ENCODE measurements at regions of chr10 and their contacts with region 1.

Region 1: GRCh38 chr10:68331455-68332258 is at the start of gene HNRNPH3:
- DNase-seq: peak; percentile 99 to 100
- H3K4me3 ChIP-seq: peak within 1 kb of the TSS; percentile 68
- H3K4me3 Mint-ChIP-seq: peak within 1 kb of the TSS; percentile 87
- H3K27ac Mint-ChIP-seq: peak within 1 kb of the TSS; percentile 100
- H3K4me1 ChIP-seq: peaks cover 21% of the 10 kb centered on the region
- H3K4me1 Mint-ChIP-seq: peaks cover 45% of the 10 kb centered on the region
- H3K27me3 ChIP-seq: no peaks in the 10 kb centered on the region
- H3K27me3 Mint-ChIP-seq: no peaks in the 10 kb centered on the region
- CTCF ChIP-seq: peak in 1 of 2 experiments; percentile 1
- total RNA-seq, gene HNRNPH3: 262 and 283 TPM in 2 replicates

Region 2: DNA sequence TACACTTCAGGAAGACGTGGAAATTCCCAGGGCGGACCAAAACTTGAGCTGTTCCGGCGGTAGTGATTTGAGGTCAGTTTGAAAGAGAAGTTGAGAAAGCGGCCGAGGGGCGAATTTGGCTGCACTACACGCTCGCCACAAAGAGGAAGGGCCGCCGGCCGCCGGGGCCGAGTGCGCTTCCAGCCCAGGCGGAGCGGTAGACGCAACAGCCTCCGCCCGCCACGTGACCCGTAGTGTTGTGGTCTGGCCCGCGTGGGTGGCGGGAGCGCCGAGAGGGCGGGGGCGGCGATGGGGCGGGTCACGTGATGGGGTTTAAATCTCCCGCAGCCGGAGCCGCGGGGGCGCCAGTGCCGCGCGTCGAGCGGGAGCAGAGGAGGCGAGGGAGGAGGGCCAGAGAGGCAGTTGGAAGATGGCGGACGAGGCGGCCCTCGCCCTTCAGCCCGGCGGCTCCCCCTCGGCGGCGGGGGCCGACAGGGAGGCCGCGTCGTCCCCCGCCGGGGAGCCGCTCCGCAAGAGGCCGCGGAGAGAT is 447.3 kb before region 1 on chr10 and contains the start of gene SIRT1:
- CTCF ChIA-PET with region 1: no interaction called
- POLR2A ChIA-PET with region 1: interaction called, 3 read pairs
- intact Hi-C with region 1: loop called (anchors 10 kb)
- DNase-seq: peak; percentile 98 to 100
- H3K4me3 ChIP-seq: peak within 1 kb of the TSS; percentile 63
- H3K4me3 Mint-ChIP-seq: peak within 1 kb of the TSS; percentile 90
- H3K27ac Mint-ChIP-seq: peak within 1 kb of the TSS; percentile 91
- H3K4me1 ChIP-seq: no peaks in the 10 kb centered on the region
- H3K4me1 Mint-ChIP-seq: no peaks in the 10 kb centered on the region
- H3K27me3 ChIP-seq: no peaks in the 10 kb centered on the region
- H3K27me3 Mint-ChIP-seq: no peaks in the 10 kb centered on the region
- CTCF ChIP-seq: peak in 1 of 2 experiments; percentile 23
- total RNA-seq, gene SIRT1: 43.1 and 44.1 TPM in 2 replicates

Region 3: GRCh38 chr10:67925449-67926005 is 406.1 kb before region 1 on chr10:
- CTCF ChIA-PET with region 1: no interaction called
- POLR2A ChIA-PET with region 1: interaction called, 15 read pairs
- intact Hi-C with region 1: no loop called
- DNase-seq: no peak
- H3K4me3 ChIP-seq: no peak overlapping the region
- H3K4me3 Mint-ChIP-seq: no peak overlapping the region
- H3K27ac Mint-ChIP-seq: no peak overlapping the region
- H3K4me1 ChIP-seq: no peaks in the 10 kb centered on the region
- H3K4me1 Mint-ChIP-seq: no peaks in the 10 kb centered on the region
- H3K27me3 ChIP-seq: no peaks in the 10 kb centered on the region
- H3K27me3 Mint-ChIP-seq: no peaks in the 10 kb centered on the region
- CTCF ChIP-seq: no peak

Region 4: GRCh38 chr10:68231106-68231816 is 100.4 kb before region 1 on chr10:
- CTCF ChIA-PET with region 1: interaction called, 8 read pairs
- POLR2A ChIA-PET with region 1: interaction called, 37 read pairs
- intact Hi-C with region 1: loop called (anchors 1 kb)
- DNase-seq: peak; percentile 89 to 94
- H3K4me3 ChIP-seq: peak overlapping the region; percentile 86
- H3K4me3 Mint-ChIP-seq: peak overlapping the region; percentile 87
- H3K27ac Mint-ChIP-seq: peak overlapping the region; percentile 72
- H3K4me1 ChIP-seq: 0 out of 2 replicates have a peak, but pooled peaks cover 5% of the 10 kb centered on the region
- H3K4me1 Mint-ChIP-seq: peaks cover 7% of the 10 kb centered on the region
- H3K27me3 ChIP-seq: no peaks in the 10 kb centered on the region
- H3K27me3 Mint-ChIP-seq: peaks cover 5% of the 10 kb centered on the region
- CTCF ChIP-seq: peak in 1 of 2 experiments; percentile 52

Region 5: DNA sequence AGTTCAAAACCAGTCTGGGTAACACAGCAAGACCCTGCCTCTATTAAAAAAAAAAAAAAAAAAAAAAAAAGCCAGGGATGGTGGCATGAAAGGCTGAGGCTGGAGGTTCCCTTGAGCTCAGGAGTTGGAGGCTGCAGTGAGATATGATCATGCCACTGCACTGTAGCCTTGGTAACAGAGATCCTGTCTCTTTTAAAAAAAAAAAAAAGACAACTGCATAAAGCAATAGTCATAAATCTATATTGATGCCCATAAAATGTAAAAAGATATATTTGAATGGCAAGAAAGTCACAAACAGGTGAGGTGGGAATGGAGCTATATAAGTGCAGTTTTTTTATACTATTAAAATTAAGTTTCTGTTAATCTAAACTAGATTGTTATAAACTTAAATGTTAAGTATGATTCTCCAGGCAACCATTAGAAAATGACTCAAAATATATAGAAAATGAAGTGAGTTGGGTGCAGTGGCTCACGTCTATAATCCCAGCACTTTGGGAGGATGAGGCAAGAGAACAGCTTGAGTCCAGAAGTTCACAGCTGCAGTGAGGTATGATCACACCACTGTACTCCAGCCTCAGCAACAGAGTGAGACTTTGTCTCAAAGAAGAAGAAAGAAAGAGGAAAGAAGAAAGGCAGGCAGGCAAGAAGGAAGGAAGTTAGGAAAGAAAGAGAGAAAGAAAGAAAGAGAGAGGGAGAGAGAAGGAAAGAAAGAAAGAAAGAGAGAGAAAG is 13.2 kb before region 1 on chr10:
- CTCF ChIA-PET with region 1: interaction called, 4 read pairs
- POLR2A ChIA-PET with region 1: interaction called, 6 read pairs
- intact Hi-C with region 1: loop called (anchors 1 kb)
- DNase-seq: peak in 1 of 2 experiments; percentile 48
- H3K4me3 ChIP-seq: no peak overlapping the region
- H3K4me3 Mint-ChIP-seq: peak overlapping the region; percentile 11
- H3K27ac Mint-ChIP-seq: peak overlapping the region; percentile 20
- H3K4me1 ChIP-seq: peaks cover 14% of the 10 kb centered on the region
- H3K4me1 Mint-ChIP-seq: peaks cover 16% of the 10 kb centered on the region
- H3K27me3 ChIP-seq: no peaks in the 10 kb centered on the region
- H3K27me3 Mint-ChIP-seq: no peaks in the 10 kb centered on the region
- CTCF ChIP-seq: no peak

Measured in Caco-2 (cell line).